ENCODE measurements at regions of chr15 and their contacts with region 1.

Region 1: DNA sequence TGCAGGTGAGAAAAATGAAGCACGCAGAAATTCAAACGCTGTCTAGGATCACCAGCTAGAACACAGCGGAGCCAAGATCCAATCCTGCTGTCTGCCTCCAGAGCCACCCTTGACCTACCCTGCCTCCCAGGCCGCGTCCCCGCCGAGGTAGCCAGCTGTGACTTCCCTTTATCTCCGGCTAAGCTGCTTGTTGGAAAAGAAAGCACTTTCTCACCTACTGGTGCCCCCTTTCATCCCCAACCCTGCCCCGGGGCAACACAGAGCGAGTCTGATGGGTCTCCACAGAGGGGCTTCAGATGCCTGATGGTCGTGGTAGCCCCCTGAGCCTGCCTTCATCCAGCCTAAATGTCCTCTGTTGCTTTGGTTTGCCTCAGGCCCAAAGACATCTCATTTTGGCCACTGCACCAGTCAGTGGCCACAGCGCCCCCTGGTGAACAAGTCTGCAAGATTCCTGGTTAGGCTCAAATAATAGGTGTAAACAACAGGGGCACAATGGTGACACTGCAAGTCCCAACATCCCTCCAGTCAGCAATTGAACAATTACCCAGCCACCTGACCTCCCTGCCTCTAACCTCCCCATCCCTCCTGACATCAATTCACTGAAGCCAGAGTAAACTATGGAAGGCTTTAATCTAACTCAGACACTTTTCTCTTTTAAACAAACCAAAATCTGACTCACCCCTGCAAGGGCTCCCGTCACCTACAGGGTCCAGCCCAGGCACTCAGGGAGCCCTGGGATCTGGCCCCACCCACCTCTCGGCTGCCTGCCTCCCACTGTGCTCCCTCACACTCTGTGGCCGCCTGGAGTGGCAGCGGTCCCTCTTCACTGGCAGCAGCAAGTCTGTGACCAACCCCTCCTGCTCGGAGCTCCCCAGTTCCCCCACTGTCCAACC is 27.3 kb upstream of the BCL2L10 start:
- DNase-seq: peak in 1 of 2 experiments; percentile 65
- H3K4me3 ChIP-seq: no peak overlapping the region
- H3K27ac ChIP-seq: no peak overlapping the region
- H3K4me1 ChIP-seq: peaks cover 5% of the 10 kb centered on the region; the same call in 1 of the 2 replicates
- H3K27me3 ChIP-seq: no peaks in the 10 kb centered on the region
- CTCF ChIP-seq: peak; percentile 87

Region 2: GRCh38 chr15:51737280-51738017 is 402.4 kb before region 1 on chr15 and contains the start of gene LYSMD2:
- CTCF ChIA-PET with region 1: no interaction called
- POLR2A ChIA-PET with region 1: interaction called, 15 read pairs
- intact Hi-C with region 1: no loop called
- DNase-seq: peak in 1 of 2 experiments; percentile 67
- H3K4me3 ChIP-seq: peak within 1 kb of the TSS; percentile 57
- H3K27ac ChIP-seq: no peak within 1 kb of the TSS
- H3K4me1 ChIP-seq: peaks cover 16% of the 10 kb centered on the region
- H3K27me3 ChIP-seq: no peaks in the 10 kb centered on the region
- CTCF ChIP-seq: no peak
- total RNA-seq, gene LYSMD2: 9.7 and 11.1 TPM in 2 replicates

Region 3: DNA sequence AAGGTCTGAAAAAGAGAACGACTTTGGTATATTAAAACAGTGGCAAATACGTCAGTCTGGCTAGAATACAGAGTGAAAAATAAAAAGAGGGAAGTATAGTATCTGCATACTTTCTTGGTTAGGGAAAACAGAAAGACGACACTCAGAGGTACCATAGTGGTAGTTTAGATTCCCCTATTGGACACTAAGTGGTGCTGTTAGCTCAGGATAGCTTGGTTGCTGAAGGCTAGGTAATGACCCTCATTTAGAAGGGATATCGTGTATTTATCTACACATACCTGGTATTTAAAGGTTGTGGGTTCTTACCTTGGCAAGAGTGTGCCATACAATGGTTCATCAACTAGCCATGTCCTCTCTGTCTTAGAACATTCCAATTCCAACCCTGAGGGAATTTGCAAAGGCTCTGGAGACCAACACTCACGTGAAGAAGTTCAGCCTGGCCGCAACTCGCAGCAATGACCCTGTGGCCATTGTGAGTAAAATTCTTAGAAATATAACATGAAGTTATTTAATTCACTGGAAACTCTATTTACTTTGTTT is 357.4 kb before region 1 on chr15:
- CTCF ChIA-PET with region 1: no interaction called
- POLR2A ChIA-PET with region 1: no interaction called
- intact Hi-C with region 1: loop called (anchors 2 kb)
- DNase-seq: peak; percentile 7 to 52
- H3K4me3 ChIP-seq: no peak overlapping the region
- H3K27ac ChIP-seq: no peak overlapping the region
- H3K4me1 ChIP-seq: peaks cover 17% of the 10 kb centered on the region
- H3K27me3 ChIP-seq: no peaks in the 10 kb centered on the region
- CTCF ChIP-seq: peak; percentile 66

Region 4: DNA sequence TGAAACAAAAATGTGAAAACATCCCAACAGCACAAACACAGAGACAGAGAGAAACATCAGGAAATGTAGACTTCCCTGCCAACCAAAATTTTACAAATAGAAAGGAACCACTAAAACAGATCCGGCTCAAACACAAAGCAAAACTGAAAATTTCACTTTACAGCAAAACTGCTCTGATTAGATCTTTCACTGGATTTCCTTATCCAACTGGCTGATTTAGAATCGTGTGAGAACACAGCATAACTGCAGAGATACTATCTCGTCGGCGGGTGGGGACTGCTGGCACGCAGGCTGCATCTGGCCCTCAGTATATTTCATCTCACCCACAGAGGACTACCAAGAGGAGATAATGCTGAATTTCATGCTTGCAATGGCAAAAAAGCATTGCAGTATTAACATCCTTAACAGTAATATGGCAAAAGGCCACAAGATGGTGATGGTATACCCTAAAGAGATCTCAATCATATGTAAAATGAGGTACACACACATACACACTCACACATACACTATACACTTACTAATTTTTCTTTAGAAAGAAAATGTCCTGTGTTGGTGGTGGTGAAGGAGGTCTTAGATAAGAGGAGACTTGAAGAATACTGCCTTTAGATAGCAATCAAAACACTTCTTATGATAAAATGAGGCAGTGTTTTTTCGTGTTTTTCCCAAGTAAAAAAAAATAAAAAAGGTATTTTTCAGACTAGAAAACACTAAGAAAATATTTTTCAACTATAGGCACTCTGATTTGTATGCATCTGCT is 157.7 kb before region 1 on chr15:
- CTCF ChIA-PET with region 1: no interaction called
- POLR2A ChIA-PET with region 1: no interaction called
- intact Hi-C with region 1: loop called (anchors 1 kb)
- DNase-seq: peak; percentile 53 to 71
- H3K4me3 ChIP-seq: peak overlapping the region; percentile 16; the same call in 1 of the 2 replicates
- H3K27ac ChIP-seq: peak overlapping the region; percentile 77
- H3K4me1 ChIP-seq: peaks cover 25% of the 10 kb centered on the region
- H3K27me3 ChIP-seq: no peaks in the 10 kb centered on the region
- CTCF ChIP-seq: peak; percentile 73

Region 5: DNA sequence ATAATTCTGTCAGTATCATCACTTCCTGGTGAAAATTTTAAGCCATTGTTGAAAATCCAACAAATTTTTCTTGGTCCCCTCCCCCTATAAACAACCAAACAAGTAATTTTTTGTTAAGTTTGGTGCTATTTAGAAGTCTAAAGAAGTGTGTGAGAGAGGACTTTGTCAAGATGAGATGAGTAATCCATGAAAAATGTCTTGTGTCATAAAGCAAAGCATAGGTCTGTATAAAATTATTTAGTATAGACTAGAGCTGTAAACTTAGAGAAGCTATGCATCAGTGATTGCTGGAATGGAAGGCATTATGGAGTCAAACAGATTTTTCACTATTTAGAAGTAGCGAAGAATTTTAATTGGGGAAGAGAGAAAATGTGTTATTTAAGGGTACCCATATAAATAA is 89.4 kb before region 1 on chr15:
- CTCF ChIA-PET with region 1: no interaction called
- POLR2A ChIA-PET with region 1: interaction called, 10 read pairs
- intact Hi-C with region 1: no loop called
- DNase-seq: peak in 1 of 2 experiments; percentile 71
- H3K4me3 ChIP-seq: no peak overlapping the region
- H3K27ac ChIP-seq: peak overlapping the region; percentile 29; the same call in 1 of the 2 replicates
- H3K4me1 ChIP-seq: peaks cover 24% of the 10 kb centered on the region
- H3K27me3 ChIP-seq: no peaks in the 10 kb centered on the region
- CTCF ChIP-seq: no peak

Region 6: DNA sequence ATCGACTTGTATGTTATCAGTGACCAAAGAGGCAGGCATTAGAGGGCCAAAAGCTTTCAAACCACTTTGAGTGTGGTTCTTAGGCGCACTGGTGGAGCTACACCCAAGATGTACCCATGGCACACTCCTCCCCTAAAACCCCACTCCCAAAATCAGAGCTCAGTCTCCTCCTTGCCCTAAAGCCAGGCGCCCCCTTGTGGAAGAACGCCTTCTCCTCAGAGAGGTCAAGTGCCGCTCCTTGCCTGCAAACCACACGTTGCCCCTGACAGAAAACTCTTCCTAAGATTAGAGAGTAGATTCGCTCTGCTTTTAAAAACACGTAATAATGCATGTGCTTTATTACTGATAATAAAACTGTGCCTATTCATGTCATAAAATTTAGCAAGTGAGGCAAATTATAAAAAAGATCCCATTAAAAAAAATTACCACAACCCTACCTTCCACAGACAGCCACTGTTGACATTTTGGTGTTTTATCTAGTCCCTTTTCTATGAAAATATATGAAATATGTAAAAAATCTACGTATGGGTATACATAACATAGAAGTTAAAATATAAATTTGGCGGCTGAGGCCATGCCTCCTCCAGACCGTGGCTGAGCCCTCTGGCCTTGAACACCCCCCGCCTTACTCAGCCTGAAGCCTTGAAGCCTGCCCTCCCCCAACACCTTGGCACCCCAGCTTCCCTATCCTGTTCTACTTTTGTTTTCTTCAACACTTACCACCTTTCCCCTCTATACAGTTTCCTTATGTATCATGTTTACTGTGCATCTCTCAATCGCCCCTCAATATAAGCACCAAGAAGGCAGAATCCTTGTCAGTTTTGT is 60.8 kb before region 1 on chr15:
- CTCF ChIA-PET with region 1: interaction called, 4 read pairs
- POLR2A ChIA-PET with region 1: no interaction called
- intact Hi-C with region 1: loop called (anchors 5 kb)
- DNase-seq: peak in 1 of 2 experiments; percentile 60
- H3K4me3 ChIP-seq: no peak overlapping the region
- H3K27ac ChIP-seq: no peak overlapping the region
- H3K4me1 ChIP-seq: peaks cover 9% of the 10 kb centered on the region; the same call in 1 of the 2 replicates
- H3K27me3 ChIP-seq: no peaks in the 10 kb centered on the region
- CTCF ChIP-seq: peak; percentile 78

Region 7: DNA sequence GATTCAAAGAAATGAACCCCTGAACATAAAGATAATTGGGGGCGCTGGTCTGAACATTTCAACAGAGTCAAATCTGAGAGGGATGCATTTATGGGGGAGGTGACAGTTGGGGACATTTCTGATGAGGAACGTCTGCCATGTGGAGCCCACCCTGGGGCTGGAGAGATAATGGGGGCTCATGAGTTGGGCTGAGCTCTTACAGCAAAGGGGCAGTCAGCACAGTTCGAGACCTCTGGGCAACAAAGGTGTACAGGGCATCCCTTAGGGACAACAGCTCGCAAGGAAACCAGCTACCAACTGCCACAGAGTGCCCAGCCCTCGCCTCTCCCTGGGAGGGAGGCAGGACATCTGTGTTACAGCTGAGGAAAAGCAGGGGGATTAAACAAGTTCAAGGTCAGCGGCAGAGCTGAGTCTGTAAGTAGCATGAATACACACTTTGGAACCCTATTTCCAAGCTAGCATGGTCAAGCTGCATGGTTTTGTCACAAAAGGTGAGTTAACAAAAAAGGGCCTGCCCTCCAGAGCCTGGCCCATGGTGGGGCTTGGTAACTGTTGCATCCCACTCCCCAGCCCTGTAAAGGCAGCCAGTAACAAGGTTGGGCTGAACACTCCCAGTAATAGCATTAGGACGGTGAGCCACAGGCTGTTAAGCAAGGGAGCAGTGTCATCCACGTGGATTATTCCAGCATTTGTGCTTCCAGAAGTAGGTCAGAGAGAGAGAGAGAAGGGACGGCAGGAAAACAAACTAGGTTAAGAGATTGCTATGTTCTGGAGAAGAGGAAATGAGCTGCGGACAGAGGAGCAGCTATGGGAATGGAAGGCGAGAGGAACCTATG is 47.0 kb after region 1 on chr15:
- CTCF ChIA-PET with region 1: interaction called, 11 read pairs
- POLR2A ChIA-PET with region 1: no interaction called
- intact Hi-C with region 1: no loop called
- DNase-seq: no peak
- H3K4me3 ChIP-seq: no peak overlapping the region
- H3K27ac ChIP-seq: no peak overlapping the region
- H3K4me1 ChIP-seq: no peaks in the 10 kb centered on the region
- H3K27me3 ChIP-seq: no peaks in the 10 kb centered on the region
- CTCF ChIP-seq: no peak